Activated CD4-positive, alpha-beta memory T cell treated with anti-CD3 and anti-CD28 coated beads for 36 hours (primary cell): ENCODE measurements at regions of chr2 and their contacts with region 1.

Region 1: DNA sequence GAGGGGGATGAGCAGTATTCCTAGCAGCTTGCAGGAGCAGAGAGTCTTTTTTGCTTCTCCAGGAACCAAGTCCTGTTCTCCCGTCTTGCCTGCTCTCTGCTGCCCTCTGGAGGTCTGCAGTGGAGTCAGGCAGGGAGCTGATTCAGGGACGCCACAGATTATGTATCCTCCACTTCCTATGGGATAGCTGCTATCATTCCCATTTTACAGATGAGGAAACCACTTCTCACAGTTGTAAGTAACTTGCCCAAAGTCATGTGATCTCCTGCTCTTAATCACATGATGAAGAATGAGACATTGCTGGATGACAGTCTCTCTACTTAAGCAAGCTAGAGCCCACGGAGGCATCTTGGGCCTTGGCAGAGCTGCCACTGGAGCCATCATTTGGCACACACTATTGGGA is 8.3 kb downstream of the SLC4A5 start:
- DNase-seq: peak; percentile 81
- H3K4me3 Mint-ChIP-seq: no peak overlapping the region
- H3K27ac Mint-ChIP-seq: no peak overlapping the region
- H3K4me1 Mint-ChIP-seq: peaks cover 5% of the 10 kb centered on the region
- H3K27me3 Mint-ChIP-seq: no peaks in the 10 kb centered on the region

Region 2: DNA sequence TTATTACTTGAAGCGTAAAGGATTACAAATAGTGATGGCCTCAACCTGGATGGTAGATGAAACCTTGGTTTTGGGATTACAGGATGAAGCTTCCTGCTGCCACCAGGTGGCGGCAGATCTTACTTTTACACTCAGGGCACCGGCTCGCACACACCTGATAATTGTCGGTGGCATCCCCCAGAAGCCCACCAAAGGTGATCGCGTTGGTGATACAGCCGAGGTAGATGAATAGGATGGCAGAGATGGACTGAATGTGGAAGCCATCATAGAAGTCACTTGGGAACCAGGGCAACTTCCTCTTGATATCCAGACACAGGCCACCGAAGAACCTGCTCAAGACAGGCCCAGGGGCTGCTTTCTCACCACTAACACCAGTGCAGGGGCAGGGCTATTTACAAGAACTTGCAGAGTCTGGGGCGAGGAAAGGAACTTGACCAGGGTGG is 84.7 kb before region 1 on chr2:
- CTCF ChIA-PET with region 1: interaction called, 193 read pairs
- POLR2A ChIA-PET with region 1: no interaction called
- intact Hi-C with region 1: loop called (anchors 1 kb)
- DNase-seq: peak; percentile 67
- H3K4me3 Mint-ChIP-seq: no peak overlapping the region
- H3K27ac Mint-ChIP-seq: no peak overlapping the region
- H3K4me1 Mint-ChIP-seq: no peaks in the 10 kb centered on the region
- H3K27me3 Mint-ChIP-seq: no peaks in the 10 kb centered on the region

Region 3: GRCh38 chr2:74275228-74275627 is 59.7 kb before region 1 on chr2:
- CTCF ChIA-PET with region 1: interaction called, 48 read pairs
- POLR2A ChIA-PET with region 1: no interaction called
- intact Hi-C with region 1: no loop called
- DNase-seq: no peak
- H3K4me3 Mint-ChIP-seq: no peak overlapping the region
- H3K27ac Mint-ChIP-seq: no peak overlapping the region
- H3K4me1 Mint-ChIP-seq: no peaks in the 10 kb centered on the region
- H3K27me3 Mint-ChIP-seq: no peaks in the 10 kb centered on the region

Region 4: DNA sequence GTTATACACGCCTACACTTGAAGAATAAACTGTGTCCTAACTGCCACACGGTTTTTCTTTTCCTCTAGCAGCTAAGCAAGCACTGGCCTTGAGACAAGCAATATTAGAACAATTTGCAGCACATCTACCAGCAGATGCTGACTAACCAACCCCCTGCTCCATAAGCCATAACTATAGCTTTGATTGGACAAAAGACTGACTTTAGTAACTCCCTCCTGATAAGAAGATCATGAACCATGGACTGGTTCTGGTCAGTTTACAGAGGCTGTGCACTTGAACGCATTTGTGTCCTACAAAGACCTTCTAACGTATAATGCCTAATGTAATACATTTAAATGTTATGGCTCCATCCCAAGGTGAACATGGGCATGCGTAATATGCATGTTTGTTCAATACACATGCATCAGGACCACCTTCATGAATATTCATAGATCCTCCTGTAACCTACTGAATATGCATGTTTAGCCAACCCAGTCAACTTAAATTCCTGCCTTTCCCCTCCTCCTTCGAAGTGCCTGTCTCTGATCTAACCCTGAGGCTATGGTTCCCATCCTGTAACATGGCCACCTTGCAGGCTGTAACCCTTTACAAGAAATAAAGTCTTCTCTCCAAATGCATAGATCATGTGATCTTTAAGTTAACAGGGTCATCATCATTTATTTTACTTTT is 18.2 kb before region 1 on chr2:
- CTCF ChIA-PET with region 1: interaction called, 24 read pairs
- POLR2A ChIA-PET with region 1: no interaction called
- intact Hi-C with region 1: no loop called
- DNase-seq: no peak
- H3K4me3 Mint-ChIP-seq: no peak overlapping the region
- H3K27ac Mint-ChIP-seq: no peak overlapping the region
- H3K4me1 Mint-ChIP-seq: no peaks in the 10 kb centered on the region
- H3K27me3 Mint-ChIP-seq: no peaks in the 10 kb centered on the region

Region 5: GRCh38 chr2:74361327-74361726 is 26.4 kb after region 1 on chr2:
- CTCF ChIA-PET with region 1: interaction called, 18 read pairs
- POLR2A ChIA-PET with region 1: no interaction called
- intact Hi-C with region 1: no loop called
- DNase-seq: no peak
- H3K4me3 Mint-ChIP-seq: no peak overlapping the region
- H3K27ac Mint-ChIP-seq: no peak overlapping the region
- H3K4me1 Mint-ChIP-seq: no peaks in the 10 kb centered on the region
- H3K27me3 Mint-ChIP-seq: no peaks in the 10 kb centered on the region

Region 6: DNA sequence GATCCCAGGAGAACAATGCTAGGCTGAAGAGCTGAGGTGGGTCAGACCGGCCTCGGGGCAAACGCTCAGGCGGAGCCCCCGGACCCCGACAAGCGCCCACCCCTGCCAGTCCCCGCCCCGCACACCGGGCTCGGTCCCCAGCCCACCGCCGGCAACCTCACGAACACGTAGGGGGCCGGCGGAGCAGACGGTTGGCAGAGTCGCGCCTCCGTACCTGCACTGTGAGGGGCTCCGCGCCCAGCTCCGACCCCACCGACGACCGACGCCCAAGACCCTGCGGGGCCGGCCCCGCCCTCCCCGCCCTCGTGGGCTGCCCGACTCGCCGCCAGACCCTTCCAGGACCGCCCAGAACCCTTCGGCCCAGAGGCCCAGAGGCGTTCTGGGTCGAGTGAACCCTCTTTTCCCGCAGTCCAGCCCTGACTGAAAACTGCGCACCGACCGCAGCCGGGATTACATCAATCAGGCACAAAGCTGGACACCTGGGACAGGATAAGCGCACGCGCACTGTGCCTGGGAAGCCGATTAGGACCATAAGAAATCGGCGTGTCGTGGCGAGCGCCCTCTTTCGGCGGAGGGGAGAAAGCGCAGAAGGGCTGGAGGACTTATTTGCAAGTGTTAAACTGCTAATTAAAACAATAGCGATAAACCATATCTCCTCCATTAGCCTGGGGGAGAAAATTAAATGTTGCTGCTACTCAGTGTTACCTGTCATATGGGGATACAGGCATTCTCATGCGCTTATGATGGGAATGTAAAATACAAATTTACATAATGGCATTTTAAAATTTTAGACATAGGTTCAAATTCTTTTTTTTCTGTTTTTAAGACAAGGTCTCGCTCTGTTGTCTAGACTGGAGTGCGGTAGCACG is 56.9 kb after region 1 on chr2:
- CTCF ChIA-PET with region 1: interaction called, 35 read pairs
- POLR2A ChIA-PET with region 1: no interaction called
- intact Hi-C with region 1: no loop called
- DNase-seq: peak; percentile 95
- H3K4me3 Mint-ChIP-seq: peak overlapping the region; percentile 92
- H3K27ac Mint-ChIP-seq: peak overlapping the region; percentile 96
- H3K4me1 Mint-ChIP-seq: peaks cover 4% of the 10 kb centered on the region
- H3K27me3 Mint-ChIP-seq: no peaks in the 10 kb centered on the region